CD4-positive, alpha-beta memory T cell (primary cell): ENCODE measurements at regions of chr3 and their contacts with region 1.

Region 1: DNA sequence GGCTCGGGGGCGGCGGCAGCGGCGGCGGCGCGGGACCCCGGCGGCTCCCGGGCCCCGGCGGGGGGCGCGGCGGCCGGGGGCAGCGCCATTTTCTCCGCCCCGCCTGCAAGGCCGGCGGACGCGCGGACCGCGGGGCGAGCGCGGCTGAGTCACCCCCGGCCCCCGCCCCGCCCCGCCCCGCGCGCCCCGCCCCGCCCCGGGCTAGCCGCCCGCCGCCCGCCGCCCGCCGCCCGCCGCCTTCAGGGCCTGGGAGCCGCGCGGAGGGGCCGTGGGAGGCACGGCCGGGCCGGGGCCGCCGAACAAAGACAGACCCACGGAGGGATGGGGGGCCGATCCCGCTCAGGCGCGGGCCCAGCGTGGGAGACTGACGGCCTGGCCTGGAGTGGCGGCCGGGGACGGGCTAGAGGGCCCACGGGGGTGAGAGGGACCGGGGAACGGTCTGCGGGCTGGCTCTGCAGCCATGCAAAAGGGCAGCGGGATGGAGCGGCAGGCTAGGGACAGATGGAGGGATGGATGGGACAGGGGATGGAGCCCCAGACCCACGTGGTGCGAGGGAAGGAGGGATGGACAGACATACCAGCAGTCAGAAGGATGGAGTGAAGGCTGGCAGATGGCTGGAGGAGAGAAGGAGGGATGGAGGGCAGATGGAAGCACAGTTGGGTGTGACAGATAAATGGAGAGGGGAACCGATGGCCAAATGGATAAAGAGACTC is at the start of gene EIF4E3:
- DNase-seq: peak in 4 of 5 donors; percentile 36 to 47 (median 45)
- H3K4me3 ChIP-seq: peak within 1 kb of the TSS; percentile 85 to 95
- H3K4me3 Mint-ChIP-seq: peak within 1 kb of the TSS; percentile 94 to 98 (median 97)
- H3K27ac ChIP-seq: peak within 1 kb of the TSS; percentile 77
- H3K27ac Mint-ChIP-seq: peak within 1 kb of the TSS; percentile 92 to 99 (median 97)
- H3K4me1 ChIP-seq: peaks cover 81% of the 10 kb centered on the region
- H3K4me1 Mint-ChIP-seq: peaks cover 56 to 79% (median 69%) of the 10 kb centered on the region in 4 donors
- H3K27me3 ChIP-seq: no peaks in the 10 kb centered on the region
- H3K27me3 Mint-ChIP-seq: no peaks in the 10 kb centered on the region
- total RNA-seq, gene EIF4E3: 51.5 to 58.7 TPM

Region 2: DNA sequence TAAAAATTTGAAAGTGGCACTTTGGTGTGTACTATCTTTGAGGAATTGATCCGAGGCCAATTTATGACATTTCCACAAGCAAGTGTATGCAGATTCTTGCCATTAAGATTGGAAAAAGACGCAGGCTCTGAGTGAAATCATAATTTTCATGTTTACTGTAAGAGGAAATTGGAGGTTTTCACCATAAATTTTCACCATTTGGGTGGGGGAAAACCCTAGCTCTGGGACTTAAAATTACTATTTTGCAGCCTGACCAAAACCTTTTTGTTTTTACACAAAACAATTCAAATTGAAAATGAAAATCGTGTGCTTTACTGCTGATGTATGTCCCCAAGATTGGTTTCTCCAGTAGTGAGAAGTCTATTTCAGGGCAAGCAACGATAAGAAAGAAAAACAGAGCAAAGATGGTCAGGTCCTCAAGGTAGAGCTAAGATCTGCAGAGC is 424.5 kb before region 1 on chr3:
- CTCF ChIA-PET with region 1: no interaction called
- POLR2A ChIA-PET with region 1: no interaction called
- intact Hi-C with region 1: no loop called
- DNase-seq: no peak
- H3K4me3 ChIP-seq: no peak overlapping the region
- H3K4me3 Mint-ChIP-seq: peak overlapping the region; percentile 14 to 82 (median 66)
- H3K27ac ChIP-seq: no peak overlapping the region
- H3K27ac Mint-ChIP-seq: peak overlapping the region; percentile 24 to 90 (median 71)
- H3K4me1 ChIP-seq: peaks cover 45% of the 10 kb centered on the region
- H3K4me1 Mint-ChIP-seq: peaks cover 40 to 72% (median 61%) of the 10 kb centered on the region in 4 donors
- H3K27me3 ChIP-seq: no peaks in the 10 kb centered on the region
- H3K27me3 Mint-ChIP-seq: no peaks in the 10 kb centered on the region

Region 3: DNA sequence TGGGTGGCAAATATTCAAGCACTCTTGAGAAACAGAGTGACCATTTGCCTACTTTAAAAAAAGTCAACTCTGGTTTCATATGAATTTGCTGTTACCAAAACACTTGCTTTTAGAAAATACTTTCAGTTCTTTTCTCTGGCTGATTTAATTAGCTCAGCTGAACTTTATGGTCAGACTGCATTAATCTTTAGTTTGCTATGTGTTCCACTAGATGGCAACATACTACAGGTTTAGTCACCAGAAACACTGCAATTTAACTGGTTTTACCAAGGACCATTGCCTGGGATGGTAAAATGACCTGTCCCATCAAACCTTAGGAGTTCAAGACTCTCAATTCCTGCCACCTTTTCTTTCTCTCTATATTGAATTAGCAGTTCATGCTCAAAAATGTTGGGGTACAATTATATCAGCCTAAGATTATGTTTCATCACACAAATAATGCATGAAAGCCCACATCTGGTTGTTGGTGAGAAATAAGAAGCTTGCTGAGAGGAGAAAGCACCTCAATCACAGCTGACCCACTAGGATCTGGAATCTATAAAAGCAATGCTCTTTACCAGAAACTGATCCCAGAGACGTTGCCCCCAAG is 14.4 kb before region 1 on chr3:
- CTCF ChIA-PET with region 1: interaction called, 100 read pairs
- POLR2A ChIA-PET with region 1: interaction called, 9 read pairs
- intact Hi-C with region 1: loop called (anchors 1 kb)
- DNase-seq: peak in 4 of 5 donors; percentile 50 to 59 (median 56)
- H3K4me3 ChIP-seq: no peak overlapping the region
- H3K4me3 Mint-ChIP-seq: peak overlapping the region in 3 of 8 donors; percentile 25 to 47 (median 25)
- H3K27ac ChIP-seq: no peak overlapping the region
- H3K27ac Mint-ChIP-seq: peak overlapping the region in 3 of 7 donors; percentile 80 to 83 (median 81)
- H3K4me1 ChIP-seq: peaks cover 87% of the 10 kb centered on the region
- H3K4me1 Mint-ChIP-seq: peaks cover 66 to 92% (median 74%) of the 10 kb centered on the region in 4 donors
- H3K27me3 ChIP-seq: no peaks in the 10 kb centered on the region
- H3K27me3 Mint-ChIP-seq: no peaks in the 10 kb centered on the region

Region 4: DNA sequence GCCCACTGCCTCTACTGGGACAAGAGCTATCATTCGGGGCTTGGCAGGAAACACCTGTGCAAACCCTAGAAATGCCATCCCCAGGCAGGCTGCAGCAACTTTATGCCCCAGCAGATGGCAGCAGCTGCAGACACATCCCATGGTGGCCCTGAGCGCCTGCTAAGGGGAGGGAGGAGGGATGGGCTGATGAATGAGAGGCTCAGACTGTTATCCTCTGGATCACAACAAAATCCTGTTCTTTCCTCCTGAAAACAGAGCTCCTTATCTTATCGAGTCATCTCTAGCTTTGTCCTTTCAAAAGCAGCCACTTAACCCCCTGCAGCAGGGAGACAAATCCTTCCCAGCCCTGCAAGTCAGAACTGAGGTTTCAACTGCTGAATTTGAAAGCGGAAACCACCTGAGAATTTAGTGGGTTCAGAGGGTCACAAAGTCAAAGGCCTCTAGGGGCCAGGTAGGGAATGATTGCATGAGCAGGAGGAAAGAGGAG is 150.1 kb after region 1 on chr3:
- CTCF ChIA-PET with region 1: interaction called, 13 read pairs
- POLR2A ChIA-PET with region 1: interaction called, 3 read pairs
- intact Hi-C with region 1: no loop called
- DNase-seq: peak; percentile 65 to 73 (median 68)
- H3K4me3 ChIP-seq: no peak overlapping the region
- H3K4me3 Mint-ChIP-seq: peak overlapping the region in 1 of 8 donors; percentile 43
- H3K27ac ChIP-seq: no peak overlapping the region
- H3K27ac Mint-ChIP-seq: no peak overlapping the region
- H3K4me1 ChIP-seq: peaks cover 26% of the 10 kb centered on the region
- H3K4me1 Mint-ChIP-seq: peaks cover 18 to 24% (median 20%) of the 10 kb centered on the region in 4 donors
- H3K27me3 ChIP-seq: no peaks in the 10 kb centered on the region
- H3K27me3 Mint-ChIP-seq: peaks cover 3 to 5% of the 10 kb centered on the region in 2 donors

Region 5: DNA sequence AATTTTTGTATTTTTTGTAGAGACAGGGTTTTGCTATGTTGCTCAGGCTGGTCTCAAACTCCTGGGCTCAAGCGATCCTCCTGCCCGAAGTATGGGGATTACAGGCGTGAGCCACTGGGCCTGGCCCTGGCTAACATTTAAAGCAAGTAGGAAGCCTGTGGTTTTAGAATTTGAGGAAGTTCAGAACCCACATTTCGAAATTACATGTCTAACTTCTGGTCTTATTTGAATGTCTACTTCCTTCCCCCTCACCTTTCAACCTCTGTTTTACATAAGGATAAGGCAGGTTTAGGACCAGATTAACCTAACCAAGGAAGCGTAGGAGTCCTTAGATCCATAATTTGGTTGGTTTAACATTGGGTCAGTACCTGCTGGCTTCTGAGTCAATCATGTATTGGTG is 180.0 kb after region 1 on chr3:
- CTCF ChIA-PET with region 1: no interaction called
- POLR2A ChIA-PET with region 1: no interaction called
- intact Hi-C with region 1: no loop called
- DNase-seq: no peak
- H3K4me3 ChIP-seq: no peak overlapping the region
- H3K4me3 Mint-ChIP-seq: no peak overlapping the region
- H3K27ac ChIP-seq: no peak overlapping the region
- H3K27ac Mint-ChIP-seq: no peak overlapping the region
- H3K4me1 ChIP-seq: peaks cover 3% of the 10 kb centered on the region
- H3K4me1 Mint-ChIP-seq: peaks cover 0 to 5% (median 3%) of the 10 kb centered on the region in 4 donors
- H3K27me3 ChIP-seq: no peaks in the 10 kb centered on the region
- H3K27me3 Mint-ChIP-seq: peaks cover 4 to 5% of the 10 kb centered on the region in 2 donors

Region 6: GRCh38 chr3:72756900-72757299 is 1031.5 kb after region 1 on chr3:
- CTCF ChIA-PET with region 1: no interaction called
- POLR2A ChIA-PET with region 1: no interaction called
- intact Hi-C with region 1: loop called (anchors 1 kb)
- DNase-seq: peak; percentile 67 to 77 (median 71)
- H3K4me3 ChIP-seq: peak overlapping the region in 1 of 2 donors; percentile 25
- H3K4me3 Mint-ChIP-seq: peak overlapping the region; percentile 50 to 84 (median 68)
- H3K27ac ChIP-seq: peak overlapping the region; percentile 49
- H3K27ac Mint-ChIP-seq: peak overlapping the region; percentile 74 to 97 (median 92)
- H3K4me1 ChIP-seq: peaks cover 34% of the 10 kb centered on the region
- H3K4me1 Mint-ChIP-seq: peaks cover 24 to 40% (median 33%) of the 10 kb centered on the region in 4 donors
- H3K27me3 ChIP-seq: no peaks in the 10 kb centered on the region
- H3K27me3 Mint-ChIP-seq: no peaks in the 10 kb centered on the region